Colonic mucosa (tissue), 4 donors: ENCODE measurements at regions of chr7 and their contacts with region 1.

Region 1: DNA sequence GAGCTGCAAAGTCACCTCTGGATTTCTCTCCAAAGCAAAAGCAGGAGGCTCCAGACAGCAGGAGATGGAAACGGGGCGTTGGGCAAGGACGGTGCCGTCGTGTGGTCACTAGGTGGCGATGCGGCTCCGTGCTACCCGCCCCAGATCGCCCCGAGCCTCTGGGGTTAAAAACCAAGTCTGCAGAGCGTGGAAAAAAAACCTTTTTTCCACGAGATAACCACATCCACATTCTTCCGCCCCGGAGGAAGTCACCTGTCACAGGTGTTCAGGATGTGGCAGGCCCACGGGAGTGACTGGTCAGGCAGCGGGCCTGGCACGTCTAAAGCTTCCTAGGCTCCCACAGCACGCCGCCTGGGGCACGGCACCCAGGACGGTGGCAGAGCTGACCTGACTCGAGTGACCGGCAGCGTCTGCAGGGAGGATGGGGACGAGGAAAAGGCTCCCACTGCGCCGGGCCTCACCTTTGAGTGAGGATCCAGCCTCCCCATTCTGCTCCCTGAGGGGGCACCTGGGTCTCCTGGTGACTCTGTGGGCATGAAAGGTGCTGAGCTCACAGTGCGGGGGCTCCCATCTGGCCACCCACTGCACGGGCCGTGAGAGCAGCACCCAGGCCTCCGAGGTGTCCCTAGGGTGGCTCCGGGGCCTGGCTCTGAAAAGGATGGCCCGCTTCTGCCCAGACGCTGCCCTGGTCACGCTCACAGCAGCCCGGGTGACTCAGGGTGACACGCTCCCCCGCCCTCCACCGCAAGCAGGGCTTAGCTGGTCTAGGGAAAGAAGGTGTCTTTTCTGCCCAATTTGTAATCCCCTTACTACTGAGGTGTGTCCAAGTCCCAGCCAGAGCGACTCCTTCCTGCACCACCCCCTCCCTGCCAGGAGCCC is 71.3 kb upstream of the TNRC18 start:
- DNase-seq: peak; percentile 72
- H3K4me3 ChIP-seq: peak overlapping the region; percentile 9
- H3K27ac ChIP-seq: no peak overlapping the region
- H3K4me1 ChIP-seq: no peaks in the 10 kb centered on the region
- H3K27me3 ChIP-seq: no peaks in the 10 kb centered on the region
- CTCF ChIP-seq: peak; percentile 96

Region 2: DNA sequence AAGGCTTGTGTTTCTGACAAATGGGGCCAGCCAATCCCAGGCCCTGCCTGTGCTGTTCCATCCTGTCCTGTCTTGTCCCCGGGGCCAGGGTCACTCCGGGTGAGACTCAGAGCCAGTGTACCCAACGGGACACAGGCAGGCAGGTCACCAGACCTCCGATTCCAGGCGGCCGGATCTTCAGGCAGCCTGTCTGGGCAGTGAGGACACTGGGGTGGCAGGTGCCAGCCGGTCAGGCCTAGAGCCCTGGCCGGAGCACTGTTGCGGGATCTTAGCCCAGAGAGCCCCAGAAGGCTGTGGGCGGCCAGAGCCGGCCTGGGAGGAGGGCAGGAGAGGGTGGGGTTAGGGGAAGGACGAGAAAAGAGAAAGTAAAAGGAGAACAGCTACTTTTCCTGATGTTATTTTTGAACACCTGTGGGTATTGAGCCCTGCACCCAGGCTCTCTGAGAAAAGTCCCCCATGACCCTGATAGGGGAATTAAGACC is 63.0 kb after region 1 on chr7:
- intact Hi-C with region 1: loop called (anchors 2 kb)
- DNase-seq: peak; percentile 77
- H3K4me3 ChIP-seq: peak overlapping the region; percentile 3
- H3K27ac ChIP-seq: peak overlapping the region; percentile 99
- H3K4me1 ChIP-seq: peaks cover 13% of the 10 kb centered on the region
- H3K27me3 ChIP-seq: no peaks in the 10 kb centered on the region
- CTCF ChIP-seq: no peak

Region 3: GRCh38 chr7:5665094-5666025 is 170.4 kb after region 1 on chr7:
- intact Hi-C with region 1: loop called (anchors 2 kb)
- DNase-seq: peak; percentile 86
- H3K4me3 ChIP-seq: no peak overlapping the region
- H3K27ac ChIP-seq: no peak overlapping the region
- H3K4me1 ChIP-seq: no peaks in the 10 kb centered on the region
- H3K27me3 ChIP-seq: no peaks in the 10 kb centered on the region
- CTCF ChIP-seq: peak; percentile 67

Region 4: GRCh38 chr7:5699467-5700384 is 204.8 kb after region 1 on chr7:
- intact Hi-C with region 1: loop called (anchors 2 kb)
- DNase-seq: no peak
- H3K4me3 ChIP-seq: no peak overlapping the region
- H3K27ac ChIP-seq: no peak overlapping the region
- H3K4me1 ChIP-seq: no peaks in the 10 kb centered on the region
- H3K27me3 ChIP-seq: no peaks in the 10 kb centered on the region
- CTCF ChIP-seq: no peak